Sciatic nerve (tissue), 2 donors: ENCODE measurements at regions of chrX and their contacts with region 1.

Region 1: DNA sequence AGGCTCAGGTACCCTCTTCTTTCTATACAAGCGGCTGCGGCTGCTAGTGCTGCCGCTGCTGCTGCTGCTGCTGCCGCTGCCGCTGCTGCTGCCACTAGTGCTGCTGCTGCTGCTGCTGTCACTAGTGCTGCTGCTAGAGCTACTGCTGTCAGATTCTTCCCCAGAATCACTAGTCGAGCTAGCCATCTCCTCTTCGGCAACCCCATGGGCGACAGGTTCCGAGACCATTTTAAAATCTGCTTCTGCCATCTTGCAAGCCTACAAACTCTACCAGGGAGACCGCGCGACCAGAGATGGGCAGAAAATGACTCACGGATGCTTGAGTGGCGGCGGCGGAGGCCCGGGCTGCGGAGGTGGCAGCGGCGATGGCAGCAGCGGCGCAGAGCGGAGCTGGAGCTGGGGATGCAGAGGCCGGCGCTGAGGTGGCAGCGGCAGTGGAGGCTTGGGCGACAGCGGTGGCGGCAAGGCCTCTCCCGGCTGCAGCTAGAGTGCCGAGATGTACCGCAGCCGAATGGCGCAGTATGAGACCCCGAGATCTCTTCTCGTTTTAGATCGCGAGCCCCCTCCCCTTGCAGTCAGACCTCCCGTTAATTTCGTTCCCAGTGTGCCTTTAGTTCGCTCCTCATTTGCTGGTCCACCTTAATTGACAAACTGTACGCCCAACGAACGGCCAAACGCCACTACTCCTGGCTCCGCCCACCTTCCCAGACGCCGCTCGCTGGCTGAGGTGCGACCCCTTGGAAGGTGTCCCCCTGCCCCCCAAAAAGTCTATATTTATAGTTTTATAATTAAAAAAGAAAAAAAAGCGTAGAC is at the start of gene NAP1L3:
- DNase-seq: peak; percentile 76
- ATAC-seq: peak; percentile 95
- total RNA-seq, gene NAP1L3: 5.5 TPM

Region 2: DNA sequence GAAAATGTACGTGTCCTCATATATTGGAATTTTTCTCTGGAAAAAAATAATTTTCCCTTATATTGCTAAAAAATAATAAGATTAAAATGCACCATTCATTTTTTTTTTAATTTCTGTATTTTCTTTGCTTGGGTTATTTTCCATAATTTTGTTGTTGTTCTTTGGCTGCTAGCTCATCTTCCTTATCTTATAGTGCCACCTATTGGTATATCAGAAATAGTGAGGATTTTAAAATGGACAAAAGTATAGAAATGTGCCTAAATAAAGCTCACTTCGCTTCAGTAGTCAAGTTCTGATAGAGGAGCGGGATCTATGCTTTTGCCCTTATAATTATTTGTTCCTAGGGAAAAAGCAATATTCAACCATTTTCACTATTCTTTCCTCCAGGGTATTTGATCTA is 134.7 kb before region 1 on chrX:
- intact Hi-C with region 1: no loop called
- DNase-seq: no peak
- ATAC-seq: no peak

Region 3: GRCh38 chrX:93649381-93649780 is 23.9 kb before region 1 on chrX:
- intact Hi-C with region 1: no loop called
- DNase-seq: no peak
- ATAC-seq: no peak

Region 4: DNA sequence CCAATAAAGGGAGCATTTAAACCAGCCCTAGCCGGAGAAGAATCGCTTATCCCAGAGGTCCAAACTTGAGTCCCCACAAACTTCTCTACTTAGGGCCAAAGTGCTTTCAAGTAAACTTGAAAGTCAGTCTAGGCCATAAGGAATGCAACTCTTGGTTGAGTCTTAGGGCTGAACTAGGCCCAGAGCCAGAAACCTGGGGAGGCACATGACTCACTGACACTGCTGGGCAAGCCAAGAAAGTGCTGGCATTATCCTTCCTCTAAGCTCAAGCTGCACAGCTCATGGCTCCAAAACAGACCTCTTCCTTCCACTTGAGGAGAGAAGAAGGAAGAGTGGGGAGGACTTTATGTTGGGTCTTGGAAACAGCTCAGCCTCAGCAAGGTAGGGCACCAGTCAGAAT is 1754.1 kb after region 1 on chrX:
- intact Hi-C with region 1: loop called (anchors 5 kb)
- DNase-seq: no peak
- ATAC-seq: no peak